ENCODE measurements at regions of chr10 and their contacts with region 1.

Region 1: GRCh38 chr10:68301790-68302502 is 29.9 kb upstream of the HNRNPH3 start:
- DNase-seq: peak; percentile 94
- ATAC-seq: peak; percentile 91
- H3K4me3 ChIP-seq: no peak overlapping the region
- H3K27ac ChIP-seq: no peak overlapping the region
- H3K4me1 ChIP-seq: peaks cover 8% of the 10 kb centered on the region; the same call in 1 of the 2 replicates
- H3K27me3 ChIP-seq: no peaks in the 10 kb centered on the region
- CTCF ChIP-seq: peak; percentile 97

Region 2: GRCh38 chr10:66958466-66958865 is 1343.5 kb before region 1 on chr10:
- CTCF ChIA-PET with region 1: no interaction called
- POLR2A ChIA-PET with region 1: interaction called, 19 read pairs
- intact Hi-C with region 1: no loop called
- DNase-seq: no peak
- ATAC-seq: no peak
- H3K4me3 ChIP-seq: no peak overlapping the region
- H3K27ac ChIP-seq: no peak overlapping the region
- H3K4me1 ChIP-seq: no peaks in the 10 kb centered on the region
- H3K27me3 ChIP-seq: peaks cover 72% of the 10 kb centered on the region
- CTCF ChIP-seq: no peak

Region 3: GRCh38 chr10:68082872-68083271 is 219.1 kb before region 1 on chr10:
- CTCF ChIA-PET with region 1: interaction called, 4 read pairs
- POLR2A ChIA-PET with region 1: no interaction called
- intact Hi-C with region 1: loop called (anchors 1 kb)
- DNase-seq: peak; percentile 89
- ATAC-seq: peak; percentile 14; the same call in 1 of the 2 replicates
- H3K4me3 ChIP-seq: no peak overlapping the region
- H3K27ac ChIP-seq: peak overlapping the region; percentile 57
- H3K4me1 ChIP-seq: peaks cover 63% of the 10 kb centered on the region
- H3K27me3 ChIP-seq: no peaks in the 10 kb centered on the region
- CTCF ChIP-seq: peak; percentile 98

Region 4: GRCh38 chr10:68221196-68221595 is 80.8 kb before region 1 on chr10:
- CTCF ChIA-PET with region 1: interaction called, 5 read pairs
- POLR2A ChIA-PET with region 1: no interaction called
- intact Hi-C with region 1: loop called (anchors 2 kb)
- DNase-seq: peak; percentile 97
- ATAC-seq: peak; percentile 85
- H3K4me3 ChIP-seq: no peak overlapping the region
- H3K27ac ChIP-seq: peak overlapping the region; percentile 21; the same call in 1 of the 2 replicates
- H3K4me1 ChIP-seq: peaks cover 24% of the 10 kb centered on the region
- H3K27me3 ChIP-seq: no peaks in the 10 kb centered on the region
- CTCF ChIP-seq: no peak

Measured in PC-3 (cell line).